IMR-90 (cell line): ENCODE measurements at regions of chr9 and their contacts with region 1.

Region 1: GRCh38 chr9:86795823-86796553 is 151.3 kb downstream of the GAS1 start:
- DNase-seq: peak; percentile 83
- ATAC-seq: peak; percentile 83
- H3K4me3 ChIP-seq: no peak overlapping the region
- H3K27ac ChIP-seq: peak overlapping the region; percentile 16; the same call in 1 of the 2 replicates
- H3K4me1 ChIP-seq: peaks cover 9% of the 10 kb centered on the region
- H3K27me3 ChIP-seq: no peaks in the 10 kb centered on the region
- CTCF ChIP-seq: peak; percentile 24; the same call in 1 of the 2 replicates
- POLR2A ChIP-seq: no peak
- RAD21 ChIP-seq: 0 out of 2 replicates have a peak, but pooled peaks have one; percentile 19

Region 2: DNA sequence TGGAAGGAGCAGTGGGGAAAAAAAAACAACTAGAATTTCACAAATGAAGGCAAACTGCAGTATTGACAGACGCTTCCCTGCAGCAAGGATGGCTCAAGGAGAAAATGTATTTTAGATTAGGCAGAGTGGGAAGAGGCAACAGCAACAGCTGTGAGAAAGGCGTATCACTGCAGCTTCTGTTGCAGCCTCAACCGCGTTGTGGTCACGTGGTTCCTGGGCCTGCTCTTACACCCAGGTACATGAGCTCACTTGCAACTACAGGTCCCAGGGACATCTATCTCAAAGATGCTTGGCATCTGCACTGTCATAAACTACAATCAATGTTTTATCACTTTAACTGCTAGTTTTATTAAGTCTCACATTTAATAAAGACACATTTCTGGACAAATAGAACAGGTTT is 660.6 kb before region 1 on chr9:
- CTCF ChIA-PET with region 1: no interaction called
- POLR2A ChIA-PET with region 1: no interaction called
- dilution Hi-C with region 1: no loop called
- in situ Hi-C with region 1: no loop called
- intact Hi-C with region 1: no loop called
- DNase-seq: no peak
- ATAC-seq: no peak
- H3K4me3 ChIP-seq: no peak overlapping the region
- H3K27ac ChIP-seq: no peak overlapping the region
- H3K4me1 ChIP-seq: no peaks in the 10 kb centered on the region
- H3K27me3 ChIP-seq: peaks cover 5% of the 10 kb centered on the region
- CTCF ChIP-seq: no peak
- POLR2A ChIP-seq: no peak
- RAD21 ChIP-seq: no peak

Region 3: DNA sequence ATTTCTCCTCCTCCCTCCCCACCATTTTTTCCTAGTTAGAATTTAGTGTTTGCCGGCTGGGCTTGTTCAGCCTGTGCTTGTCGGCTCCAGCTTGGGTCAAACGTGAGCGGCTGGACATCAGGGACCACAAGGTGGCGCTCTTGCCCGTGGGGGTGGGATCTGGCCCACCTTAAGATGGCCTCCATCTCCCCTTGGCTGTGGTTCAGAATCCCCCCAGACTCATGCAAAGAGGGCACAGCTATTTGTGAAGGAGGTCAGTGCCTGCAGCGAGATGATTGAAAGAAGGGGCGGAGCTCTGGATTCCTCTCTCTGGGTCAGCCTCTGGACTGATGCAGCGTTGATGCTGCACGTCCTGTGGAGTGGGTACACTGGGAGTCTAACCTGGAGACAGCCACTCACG is 158.5 kb before region 1 on chr9:
- CTCF ChIA-PET with region 1: no interaction called
- POLR2A ChIA-PET with region 1: no interaction called
- dilution Hi-C with region 1: no loop called
- in situ Hi-C with region 1: no loop called
- intact Hi-C with region 1: loop called (anchors 1 kb)
- DNase-seq: peak; percentile 39
- ATAC-seq: peak; percentile 62
- H3K4me3 ChIP-seq: no peak overlapping the region
- H3K27ac ChIP-seq: no peak overlapping the region
- H3K4me1 ChIP-seq: no peaks in the 10 kb centered on the region; the same call in 1 of the 2 replicates
- H3K27me3 ChIP-seq: 0 out of 2 replicates have a peak, but pooled peaks cover 2% of the 10 kb centered on the region
- CTCF ChIP-seq: peak; percentile 62
- POLR2A ChIP-seq: no peak
- RAD21 ChIP-seq: peak; percentile 83

Region 4: DNA sequence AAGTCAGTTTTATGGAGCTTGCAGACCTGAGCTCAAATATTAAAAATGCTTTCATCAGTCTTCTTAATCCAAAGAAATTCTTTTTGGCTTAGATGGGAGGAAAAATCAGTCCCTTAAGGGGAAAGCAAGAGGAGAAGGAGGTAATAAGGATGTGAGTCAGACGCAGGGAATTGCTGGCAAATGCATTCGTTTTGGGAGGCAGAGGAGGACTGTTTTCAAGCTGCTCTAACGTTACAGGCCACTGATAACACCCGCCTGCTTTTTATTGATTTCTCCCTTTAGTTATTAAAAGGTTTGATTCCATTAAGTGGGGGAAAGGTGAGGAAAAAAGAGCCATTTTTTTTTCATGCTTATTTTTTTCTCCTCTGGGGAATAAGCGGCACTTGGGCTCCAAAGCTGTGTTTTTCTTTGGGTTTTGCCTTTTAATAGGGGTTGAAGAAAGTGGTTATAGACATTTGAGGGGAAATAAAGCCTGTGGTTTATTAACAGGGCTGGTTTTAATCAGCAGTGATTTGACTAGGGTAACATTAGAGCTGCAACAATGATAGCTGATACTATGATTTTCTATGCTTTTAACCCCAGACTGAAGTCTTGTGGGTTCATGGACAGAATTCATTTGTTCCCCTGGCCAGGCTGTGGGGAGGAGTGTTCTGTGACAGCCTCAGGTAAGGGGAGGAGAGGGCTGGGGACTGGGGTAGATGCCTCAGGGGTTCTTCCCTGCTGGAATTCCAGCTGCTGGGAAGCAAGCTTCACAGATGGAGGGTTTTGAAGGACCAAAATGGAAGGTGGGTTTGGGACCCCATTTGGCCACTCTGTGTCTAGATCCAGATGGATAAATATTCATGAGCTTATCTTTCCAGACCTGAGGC is 73.9 kb before region 1 on chr9:
- CTCF ChIA-PET with region 1: no interaction called
- POLR2A ChIA-PET with region 1: no interaction called
- dilution Hi-C with region 1: no loop called
- in situ Hi-C with region 1: no loop called
- intact Hi-C with region 1: loop called (anchors 5 kb)
- DNase-seq: peak; percentile 93
- ATAC-seq: peak; percentile 96
- H3K4me3 ChIP-seq: no peak overlapping the region
- H3K27ac ChIP-seq: peak overlapping the region; percentile 94
- H3K4me1 ChIP-seq: peaks cover 20% of the 10 kb centered on the region
- H3K27me3 ChIP-seq: no peaks in the 10 kb centered on the region
- CTCF ChIP-seq: no peak
- POLR2A ChIP-seq: no peak
- RAD21 ChIP-seq: 0 out of 2 replicates have a peak, but pooled peaks have one; percentile 8